ENCODE measurements at regions of chr11 and their contacts with region 1.

Region 1: GRCh38 chr11:22539821-22540256 is 85.8 kb downstream of the FANCF start:
- DNase-seq: no peak
- H3K4me3 ChIP-seq: no peak overlapping the region
- H3K27ac ChIP-seq: no peak overlapping the region
- H3K4me1 ChIP-seq: no peaks in the 10 kb centered on the region
- H3K27me3 ChIP-seq: no peaks in the 10 kb centered on the region
- CTCF ChIP-seq: peak in 2 of 3 experiments; percentile 58 to 59; a peak in 2 of 4 replicates
- EP300 ChIP-seq: no peak
- POLR2A ChIP-seq: no peak
- RAD21 ChIP-seq: peak; percentile 84 to 85

Region 2: GRCh38 chr11:22244986-22245592 is 294.8 kb before region 1 on chr11:
- CTCF ChIA-PET with region 1: interaction called, 10 read pairs
- POLR2A ChIA-PET with region 1: no interaction called
- DNase-seq: peak in 1 of 2 experiments; percentile 25
- H3K4me3 ChIP-seq: no peak overlapping the region
- H3K27ac ChIP-seq: no peak overlapping the region
- H3K4me1 ChIP-seq: no peaks in the 10 kb centered on the region
- H3K27me3 ChIP-seq: no peaks in the 10 kb centered on the region
- CTCF ChIP-seq: peak in 2 of 3 experiments; percentile 65 to 80; a peak in 3 of 4 replicates
- EP300 ChIP-seq: no peak
- POLR2A ChIP-seq: no peak
- RAD21 ChIP-seq: peak; percentile 71 to 75

Region 3: DNA sequence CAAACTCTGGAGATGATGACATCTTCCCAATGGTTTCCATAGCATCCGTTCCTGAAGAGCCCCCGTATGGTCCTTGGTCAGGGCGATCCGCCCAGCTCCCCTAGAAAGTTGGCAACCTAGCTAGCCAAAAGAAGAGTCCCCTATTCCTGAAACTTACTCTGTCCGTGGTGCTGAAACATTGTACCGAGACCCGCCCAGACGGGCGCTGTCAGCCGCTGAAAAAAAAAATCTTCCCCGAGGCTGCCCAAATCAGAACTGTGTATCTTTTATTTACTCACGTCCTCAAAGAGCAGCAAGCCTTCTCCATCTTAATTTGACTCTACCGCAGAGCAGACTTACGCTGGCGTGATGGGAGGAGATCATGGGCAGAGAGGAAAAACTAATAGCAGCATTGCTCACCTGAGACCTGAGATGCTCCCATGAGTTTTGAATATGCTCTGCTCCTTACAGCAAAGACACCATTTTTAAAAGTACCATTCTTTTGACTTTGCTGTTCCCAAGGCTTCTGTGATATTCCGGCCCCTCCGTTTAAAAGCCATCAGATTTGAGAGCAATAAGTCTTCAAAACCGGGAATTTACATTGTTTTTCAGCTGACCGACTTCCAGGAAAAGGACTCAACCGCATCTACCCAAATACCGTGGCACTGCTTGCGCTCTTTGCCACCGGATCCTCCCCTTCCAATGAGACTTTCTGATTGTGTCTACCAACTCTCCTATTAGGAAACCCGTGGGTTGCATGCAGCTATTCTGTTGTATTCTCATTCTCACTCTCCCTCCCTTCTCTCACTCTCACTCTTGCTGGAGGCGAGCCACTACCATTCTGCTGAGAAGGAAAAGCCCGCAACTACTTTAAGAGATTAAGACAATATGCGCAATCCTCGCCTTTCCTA is 202.0 kb before region 1 on chr11 and contains the start of gene SLC17A6:
- CTCF ChIA-PET with region 1: interaction called, 22 read pairs
- POLR2A ChIA-PET with region 1: no interaction called
- DNase-seq: peak in 1 of 2 experiments; percentile 77
- H3K4me3 ChIP-seq: peak within 1 kb of the TSS; percentile 25 to 58 (median 43); a peak in 7 of 8 replicates
- H3K27ac ChIP-seq: no peak within 1 kb of the TSS
- H3K4me1 ChIP-seq: peaks cover 11 to 24% (median 17%) of the 10 kb centered on the region in 4 experiments
- H3K27me3 ChIP-seq: peaks cover 8 to 35% (median 21%) of the 10 kb centered on the region in 4 experiments; a peak in 6 of 7 replicates
- CTCF ChIP-seq: no peak
- EP300 ChIP-seq: no peak
- POLR2A ChIP-seq: no peak
- RAD21 ChIP-seq: 0 out of 4 replicates have a peak, but pooled peaks of 1 of the 2 experiments have one; percentile 8
- total RNA-seq, gene SLC17A6: 0.73 and 1.6 TPM in 2 replicates

Region 4: DNA sequence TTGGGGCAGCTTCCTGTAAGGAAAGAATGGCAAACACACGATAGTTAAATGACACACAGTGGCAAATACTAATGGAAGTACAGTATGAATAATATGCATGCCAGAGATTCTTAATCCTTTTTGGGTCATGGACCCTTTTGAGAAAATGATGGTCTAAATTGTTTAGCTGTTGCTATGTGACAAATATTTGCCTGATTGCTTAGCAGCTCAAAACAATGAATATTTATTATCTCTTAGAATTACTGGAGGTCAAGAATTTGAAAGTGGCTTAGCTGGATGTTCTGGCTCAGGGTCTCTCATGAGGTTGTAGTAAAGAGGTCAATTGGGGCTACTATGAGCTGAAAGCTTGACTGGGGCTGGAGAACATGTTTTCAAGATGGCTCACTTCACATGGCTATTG is 16.0 kb after region 1 on chr11:
- CTCF ChIA-PET with region 1: interaction called, 13 read pairs
- POLR2A ChIA-PET with region 1: no interaction called
- DNase-seq: no peak
- H3K4me3 ChIP-seq: no peak overlapping the region
- H3K27ac ChIP-seq: no peak overlapping the region
- H3K4me1 ChIP-seq: no peaks in the 10 kb centered on the region
- H3K27me3 ChIP-seq: no peaks in the 10 kb centered on the region
- CTCF ChIP-seq: no peak
- EP300 ChIP-seq: no peak
- POLR2A ChIP-seq: no peak
- RAD21 ChIP-seq: no peak

Measured in H1 (cell line).